ENCODE measurements at regions of chr19 and their contacts with region 1.

Region 1: DNA sequence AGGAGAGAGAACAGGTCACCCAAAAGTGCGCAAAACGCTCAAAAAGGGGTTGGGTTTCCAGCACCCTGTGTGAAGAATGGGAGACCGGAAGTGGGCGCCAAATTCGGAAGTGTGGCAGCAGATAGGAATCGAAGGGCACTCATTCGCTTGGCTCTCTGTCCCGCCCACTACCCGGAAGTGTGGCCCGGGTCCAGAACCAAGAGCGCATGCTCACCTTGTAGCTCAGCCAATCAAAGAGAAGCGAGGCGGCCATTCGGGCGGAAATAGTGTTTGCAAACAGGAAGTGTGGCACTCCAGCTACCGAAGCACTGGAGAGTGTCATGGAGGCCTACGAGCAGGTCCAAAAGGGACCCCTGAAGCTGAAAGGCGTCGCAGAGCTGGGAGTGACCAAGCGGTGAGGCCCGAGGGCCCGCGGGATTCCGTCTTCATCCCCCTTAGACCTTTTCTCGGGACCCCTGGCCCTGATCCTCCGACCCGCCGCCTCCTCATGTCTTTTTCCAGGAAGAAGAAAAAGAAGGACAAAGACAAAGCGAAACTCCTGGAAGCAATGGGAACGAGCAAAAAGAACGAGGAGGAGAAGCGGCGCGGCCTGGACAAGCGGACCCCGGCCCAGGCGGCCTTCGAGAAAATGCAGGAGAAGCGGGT is at the start of gene FAM32A:
- DNase-seq: peak; percentile 100
- H3K4me3 Mint-ChIP-seq: peak within 1 kb of the TSS; percentile 98
- H3K27ac Mint-ChIP-seq: peak within 1 kb of the TSS; percentile 94
- H3K4me1 Mint-ChIP-seq: peaks cover 28% of the 10 kb centered on the region
- H3K27me3 Mint-ChIP-seq: peaks cover 4% of the 10 kb centered on the region
- total RNA-seq, gene FAM32A: 43.8 to 44.3 TPM

Region 2: DNA sequence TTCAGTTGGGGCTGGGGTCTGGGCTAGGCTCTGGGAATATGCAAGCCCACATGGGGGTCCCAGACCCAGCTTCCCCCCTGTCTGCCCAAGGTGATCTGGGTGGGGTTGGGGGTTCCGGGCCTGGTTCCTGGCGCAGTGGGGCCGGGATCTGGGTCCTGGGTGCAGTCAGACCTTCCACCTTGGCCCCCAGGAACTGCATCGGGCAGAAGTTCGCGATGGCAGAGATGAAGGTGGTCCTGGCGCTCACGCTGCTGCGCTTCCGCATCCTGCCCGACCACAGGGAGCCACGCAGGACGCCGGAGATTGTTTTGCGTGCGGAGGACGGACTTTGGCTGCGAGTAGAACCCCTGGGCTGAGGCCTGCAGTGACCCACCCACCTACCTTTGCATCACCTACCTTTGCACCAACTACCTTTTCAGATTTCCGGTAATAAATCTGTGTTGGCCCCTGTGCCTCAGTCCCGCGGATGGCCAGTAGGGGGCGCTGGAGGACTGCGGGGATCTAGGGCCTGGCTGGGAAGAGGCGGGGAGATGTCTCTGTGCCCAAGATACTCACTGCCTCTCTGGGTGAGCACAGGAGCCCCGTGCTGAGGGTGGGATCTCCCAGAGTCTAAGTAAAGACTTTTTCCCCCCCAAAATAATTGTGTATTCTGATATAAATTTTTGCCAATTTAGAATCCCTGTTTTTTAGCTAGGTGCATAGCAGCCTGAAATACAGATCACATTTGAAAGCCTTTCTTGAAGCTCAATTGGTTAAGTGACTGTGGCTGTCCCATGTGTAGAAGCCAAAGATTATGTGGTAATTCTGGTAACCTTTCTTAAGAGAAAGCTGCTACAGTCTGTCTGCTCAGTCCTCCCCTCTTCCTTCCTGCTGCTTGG is 556.0 kb before region 1 on chr19:
- CTCF ChIA-PET with region 1: interaction called, 11 read pairs
- POLR2A ChIA-PET with region 1: no interaction called
- intact Hi-C with region 1: loop called (anchors 2 kb)
- DNase-seq: peak; percentile 91
- H3K4me3 Mint-ChIP-seq: no peak overlapping the region
- H3K27ac Mint-ChIP-seq: no peak overlapping the region
- H3K4me1 Mint-ChIP-seq: no peaks in the 10 kb centered on the region
- H3K27me3 Mint-ChIP-seq: peaks cover 7% of the 10 kb centered on the region

Region 3: GRCh38 chr19:15937771-15938170 is 247.5 kb before region 1 on chr19:
- CTCF ChIA-PET with region 1: no interaction called
- POLR2A ChIA-PET with region 1: no interaction called
- intact Hi-C with region 1: no loop called
- DNase-seq: no peak
- H3K4me3 Mint-ChIP-seq: no peak overlapping the region
- H3K27ac Mint-ChIP-seq: no peak overlapping the region
- H3K4me1 Mint-ChIP-seq: no peaks in the 10 kb centered on the region
- H3K27me3 Mint-ChIP-seq: peaks cover 23% of the 10 kb centered on the region

Region 4: DNA sequence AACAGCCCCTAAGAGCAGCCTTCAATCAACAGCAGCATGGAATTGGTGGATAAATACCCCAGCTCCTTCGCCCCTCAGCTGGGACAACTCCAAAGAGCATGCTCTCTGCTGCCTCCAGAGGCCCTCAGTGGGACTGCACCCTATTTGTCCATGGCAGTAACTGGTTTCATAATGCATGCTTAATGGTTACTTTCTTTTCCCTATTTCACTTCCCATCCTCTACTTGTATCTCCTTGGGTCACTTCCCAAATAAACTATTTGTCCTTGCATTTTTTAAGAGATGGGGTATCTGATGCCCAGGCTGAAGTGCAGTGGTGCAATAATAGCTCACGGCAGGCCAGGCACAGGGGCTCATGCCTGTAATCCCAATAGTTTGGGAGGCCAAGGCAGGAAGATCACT is 122.5 kb before region 1 on chr19:
- CTCF ChIA-PET with region 1: interaction called, 8 read pairs
- POLR2A ChIA-PET with region 1: no interaction called
- intact Hi-C with region 1: loop called (anchors 1 kb)
- DNase-seq: peak; percentile 80
- H3K4me3 Mint-ChIP-seq: no peak overlapping the region
- H3K27ac Mint-ChIP-seq: peak overlapping the region; percentile 38
- H3K4me1 Mint-ChIP-seq: peaks cover 30% of the 10 kb centered on the region
- H3K27me3 Mint-ChIP-seq: peaks cover 2% of the 10 kb centered on the region

Region 5: DNA sequence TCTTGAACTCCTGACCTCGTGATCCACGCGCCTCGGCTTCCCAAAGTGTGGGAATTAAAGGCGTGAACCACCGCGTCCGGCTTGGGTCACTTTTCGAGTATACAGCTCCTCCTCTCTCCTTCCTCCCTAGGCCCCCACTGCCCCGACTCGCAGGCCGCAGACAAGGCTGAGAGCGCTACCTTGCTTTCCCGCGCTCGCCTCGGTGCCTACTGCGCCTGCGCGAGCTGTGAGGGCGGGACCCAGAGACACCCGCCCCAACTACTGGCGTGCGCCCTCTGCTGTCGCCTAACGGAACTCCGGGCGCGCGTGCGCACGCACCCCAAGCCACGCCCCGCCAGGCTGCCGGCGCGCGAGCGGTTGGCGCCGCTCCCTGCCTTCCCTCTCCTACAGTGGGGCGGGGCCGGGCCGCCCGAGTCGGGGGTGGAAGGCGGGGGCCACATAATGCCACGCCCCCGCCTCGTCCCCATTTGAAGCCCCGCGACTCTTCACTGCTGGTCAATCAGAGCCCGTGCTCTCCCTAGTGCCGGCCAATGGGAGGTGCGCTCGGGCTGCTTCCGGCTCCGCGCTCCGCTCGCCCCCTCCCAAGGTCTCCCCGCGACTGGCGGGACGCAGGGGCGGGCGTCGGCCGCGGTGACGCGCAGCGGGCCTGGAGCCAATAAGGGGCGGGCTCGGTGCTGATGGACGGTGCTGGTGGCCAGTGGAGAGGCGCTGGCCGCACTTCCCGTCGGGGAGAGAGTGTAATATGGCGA is 73.9 kb before region 1 on chr19 and contains the start of gene RAB8A:
- CTCF ChIA-PET with region 1: interaction called, 6 read pairs
- POLR2A ChIA-PET with region 1: interaction called, 3 read pairs
- intact Hi-C with region 1: loop called (anchors 1 kb)
- DNase-seq: peak; percentile 99
- H3K4me3 Mint-ChIP-seq: peak within 1 kb of the TSS; percentile 98
- H3K27ac Mint-ChIP-seq: peak within 1 kb of the TSS; percentile 97
- H3K4me1 Mint-ChIP-seq: peaks cover 40% of the 10 kb centered on the region
- H3K27me3 Mint-ChIP-seq: no peaks in the 10 kb centered on the region
- total RNA-seq, gene RAB8A: 146 to 154 TPM

Region 6: DNA sequence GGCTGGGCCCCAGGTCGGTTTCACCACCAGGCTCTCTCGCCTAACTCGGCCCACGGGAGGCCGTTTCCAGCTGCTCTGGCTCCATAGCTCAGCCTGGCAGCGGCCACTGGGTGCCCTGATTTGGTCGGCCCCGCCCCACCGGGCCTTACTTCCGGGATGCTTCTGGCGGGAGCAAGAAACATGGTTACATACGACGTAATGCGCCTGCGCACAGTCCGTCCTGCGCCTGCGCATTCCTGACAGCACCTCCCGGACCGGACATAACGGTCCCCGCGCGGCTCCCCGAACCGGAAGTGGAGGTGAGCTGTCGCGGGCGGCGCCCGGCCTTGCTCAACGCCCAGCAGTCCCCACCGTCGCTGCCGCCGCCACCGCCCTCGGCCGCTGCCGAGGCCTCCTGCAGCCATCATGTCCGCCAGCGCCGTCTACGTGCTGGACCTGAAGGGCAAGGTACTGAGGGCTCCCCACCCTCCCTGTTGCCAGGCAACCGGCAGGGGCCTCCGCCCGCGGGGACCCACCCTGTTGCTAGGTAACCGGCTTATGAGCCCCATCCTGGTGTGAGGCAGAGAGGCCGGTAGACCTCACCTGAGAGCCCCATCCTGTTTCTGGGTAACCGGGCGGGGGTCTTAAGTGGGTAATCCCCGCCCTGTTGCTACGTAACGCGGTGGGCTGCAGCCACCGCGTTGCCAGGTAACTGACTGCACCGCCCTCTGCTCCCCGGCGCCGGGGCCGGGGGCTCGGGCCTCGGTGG is 12.6 kb after region 1 on chr19 and contains the start of gene AP1M1:
- CTCF ChIA-PET with region 1: interaction called, 20 read pairs
- POLR2A ChIA-PET with region 1: interaction called, 11 read pairs
- intact Hi-C with region 1: loop called (anchors 1 kb)
- DNase-seq: peak; percentile 99
- H3K4me3 Mint-ChIP-seq: peak within 1 kb of the TSS; percentile 97
- H3K27ac Mint-ChIP-seq: peak within 1 kb of the TSS; percentile 92
- H3K4me1 Mint-ChIP-seq: peaks cover 41% of the 10 kb centered on the region
- H3K27me3 Mint-ChIP-seq: no peaks in the 10 kb centered on the region
- total RNA-seq, gene AP1M1: 100 to 113 TPM

Measured in activated CD4-positive, alpha-beta memory T cell treated with anti-CD3 and anti-CD28 coated beads for 36 hours (primary cell).